Prostate gland (tissue), 2 donors: ENCODE measurements at regions of chr15 and their contacts with region 1.

Region 1: DNA sequence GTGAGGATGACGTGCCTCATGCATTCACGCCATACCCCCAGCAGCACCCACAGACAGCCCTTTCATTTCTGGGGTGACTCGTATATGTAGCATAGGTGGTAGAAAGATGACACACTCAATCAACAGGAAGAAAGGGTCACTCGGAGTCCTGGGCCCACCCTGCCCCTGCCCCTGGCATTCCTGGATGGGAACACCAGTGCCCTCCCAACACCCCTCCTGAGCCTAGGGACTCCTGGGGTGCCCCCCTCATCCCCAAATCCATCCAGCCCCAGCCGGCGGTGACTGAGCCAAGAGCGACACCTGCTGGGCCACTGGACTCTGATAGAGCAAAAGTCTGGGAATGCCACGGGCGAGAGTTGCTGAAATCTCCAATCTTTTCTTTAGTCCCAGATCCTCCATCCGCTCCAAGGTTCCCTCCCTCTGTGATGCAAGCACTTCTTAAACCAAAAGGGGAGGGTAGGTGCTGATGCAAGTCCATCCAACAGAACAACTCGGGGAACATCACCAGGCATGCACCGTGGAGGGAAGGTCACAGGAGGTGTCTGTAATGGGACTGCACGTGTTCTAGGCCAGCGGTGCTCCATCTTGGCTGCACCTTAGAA is 31.1 kb downstream of the ACAN start:
- DNase-seq: no peak
- H3K4me3 ChIP-seq: no peak overlapping the region
- H3K27ac ChIP-seq: no peak overlapping the region
- H3K4me1 ChIP-seq: no peaks in the 10 kb centered on the region
- H3K27me3 ChIP-seq: no peaks in the 10 kb centered on the region
- CTCF ChIP-seq: peak in 3 of 4 experiments; percentile 15 to 48 (median 46)
- POLR2A ChIP-seq: no peak

Region 2: GRCh38 chr15:88657326-88658069 is 176.8 kb before region 1 on chr15:
- intact Hi-C with region 1: loop called (anchors 5 kb)
- DNase-seq: no peak
- H3K4me3 ChIP-seq: no peak overlapping the region
- H3K27ac ChIP-seq: no peak overlapping the region
- H3K4me1 ChIP-seq: no peaks in the 10 kb centered on the region
- H3K27me3 ChIP-seq: no peaks in the 10 kb centered on the region
- CTCF ChIP-seq: peak in 3 of 4 experiments; percentile 38 to 68 (median 56)
- POLR2A ChIP-seq: no peak